Activated CD8-positive, alpha-beta T cell treated with anti-CD3 and anti-CD28 coated beads for 36 hours (primary cell): ENCODE measurements at regions of chr12 and their contacts with region 1.

Region 1: GRCh38 chr12:57101844-57102695 is 9.1 kb downstream of the STAT6 start:
- DNase-seq: no peak
- ATAC-seq: peak; percentile 31
- H3K4me3 Mint-ChIP-seq: no peak overlapping the region
- H3K27ac Mint-ChIP-seq: peak overlapping the region; percentile 86
- H3K4me1 Mint-ChIP-seq: peaks cover 61% of the 10 kb centered on the region
- H3K27me3 Mint-ChIP-seq: no peaks in the 10 kb centered on the region
- CTCF ChIP-seq: no peak

Region 2: GRCh38 chr12:57069523-57069922 is 32.5 kb before region 1 on chr12:
- CTCF ChIA-PET with region 1: interaction called, 193 read pairs
- POLR2A ChIA-PET with region 1: interaction called, 155 read pairs
- intact Hi-C with region 1: no loop called
- DNase-seq: peak; percentile 79
- ATAC-seq: peak; percentile 90
- H3K4me3 Mint-ChIP-seq: peak overlapping the region; percentile 62
- H3K27ac Mint-ChIP-seq: peak overlapping the region; percentile 90
- H3K4me1 Mint-ChIP-seq: peaks cover 71% of the 10 kb centered on the region
- H3K27me3 Mint-ChIP-seq: no peaks in the 10 kb centered on the region
- CTCF ChIP-seq: peak; percentile 86

Region 3: DNA sequence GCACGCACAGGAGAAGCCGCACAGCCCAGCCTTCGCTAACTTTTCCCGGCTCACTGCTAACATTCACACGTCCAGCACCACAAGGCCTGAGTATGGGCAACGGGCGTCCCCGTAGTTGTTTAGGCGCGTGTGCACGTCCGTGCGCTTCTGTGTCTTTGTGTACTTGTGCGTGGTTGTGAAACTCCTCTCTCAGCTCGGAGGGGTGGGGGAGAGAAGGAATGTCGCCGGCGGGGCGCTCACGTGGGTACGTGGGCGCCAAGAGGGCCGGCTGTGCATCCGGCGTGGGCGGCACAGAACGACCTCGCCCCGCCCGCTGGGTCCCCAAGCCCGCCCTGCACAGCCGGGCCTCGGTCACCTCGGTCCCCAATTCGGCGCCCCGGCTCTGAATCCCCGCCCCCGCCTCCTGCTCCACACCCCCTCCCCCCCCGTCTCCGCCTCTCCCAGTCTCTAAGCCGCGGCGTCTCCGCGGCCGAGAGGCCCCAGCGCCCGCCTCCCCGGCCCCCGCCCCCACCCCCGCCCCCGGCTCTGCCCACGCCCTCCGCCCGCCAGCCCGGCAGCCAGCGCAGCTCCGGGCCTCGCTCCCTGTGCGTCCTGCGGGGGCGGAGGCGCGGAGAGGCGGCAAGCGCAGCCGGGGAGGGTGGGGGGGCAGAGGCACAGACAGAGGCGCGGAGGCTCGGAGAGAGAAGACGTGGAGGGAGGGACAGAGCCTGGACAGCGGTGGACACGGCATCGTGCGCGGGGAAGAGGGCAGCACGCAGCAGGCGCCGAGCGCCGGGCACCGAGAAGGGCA is 13.4 kb before region 1 on chr12 and contains the start of gene NAB2:
- CTCF ChIA-PET with region 1: interaction called, 167 read pairs
- POLR2A ChIA-PET with region 1: interaction called, 417 read pairs
- intact Hi-C with region 1: no loop called
- DNase-seq: peak; percentile 93
- ATAC-seq: peak; percentile 45
- H3K4me3 Mint-ChIP-seq: peak within 1 kb of the TSS; percentile 90
- H3K27ac Mint-ChIP-seq: peak within 1 kb of the TSS; percentile 97
- H3K4me1 Mint-ChIP-seq: peaks cover 53% of the 10 kb centered on the region
- H3K27me3 Mint-ChIP-seq: no peaks in the 10 kb centered on the region
- CTCF ChIP-seq: no peak
- total RNA-seq, gene NAB2: 69.3 to 70.8 TPM

Region 4: GRCh38 chr12:57135527-57136326 is 33.7 kb after region 1 on chr12:
- CTCF ChIA-PET with region 1: no interaction called
- POLR2A ChIA-PET with region 1: no interaction called
- intact Hi-C with region 1: no loop called
- DNase-seq: no peak
- ATAC-seq: no peak
- H3K4me3 Mint-ChIP-seq: no peak overlapping the region
- H3K27ac Mint-ChIP-seq: no peak overlapping the region
- H3K4me1 Mint-ChIP-seq: peaks cover 3% of the 10 kb centered on the region
- H3K27me3 Mint-ChIP-seq: no peaks in the 10 kb centered on the region
- CTCF ChIP-seq: no peak